ENCODE measurements at regions of chr11 and their contacts with region 1.

Region 1: DNA sequence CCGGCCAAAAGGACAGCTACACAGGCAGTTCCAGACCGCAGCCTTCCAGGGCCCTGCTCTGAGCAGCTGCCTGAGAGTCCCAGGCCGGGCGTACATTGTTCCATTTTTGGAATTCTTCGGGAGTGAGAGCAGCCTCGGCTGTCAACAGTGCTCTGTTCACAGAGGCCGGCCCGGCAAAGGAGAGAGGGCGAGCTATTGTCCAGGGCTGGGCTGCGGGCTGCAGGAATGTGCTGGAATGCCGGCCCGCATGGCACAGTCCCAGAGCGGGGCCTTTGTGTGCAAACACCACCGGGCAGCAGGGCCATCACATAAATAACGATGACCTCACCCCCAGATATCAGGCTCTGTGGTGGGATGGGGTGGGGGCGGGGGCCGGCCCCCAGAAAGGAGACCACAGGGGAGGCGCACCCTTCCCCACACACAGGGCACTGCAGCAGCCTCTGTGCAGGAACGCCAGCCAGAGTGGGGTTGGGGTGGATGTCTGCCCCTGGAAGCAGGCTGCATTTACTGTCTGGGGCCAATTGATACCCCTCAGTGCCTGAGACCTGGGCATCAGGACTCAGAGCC is 15.8 kb downstream of the LINC01488 start:
- DNase-seq: peak; percentile 95 to 97
- H3K4me3 ChIP-seq: no peak overlapping the region
- H3K4me3 Mint-ChIP-seq: peak overlapping the region; percentile 65
- H3K27ac Mint-ChIP-seq: peak overlapping the region; percentile 92
- H3K4me1 ChIP-seq: peaks cover 59% of the 10 kb centered on the region
- H3K4me1 Mint-ChIP-seq: peaks cover 65% of the 10 kb centered on the region
- H3K27me3 ChIP-seq: no peaks in the 10 kb centered on the region
- H3K27me3 Mint-ChIP-seq: no peaks in the 10 kb centered on the region
- CTCF ChIP-seq: no peak

Region 2: DNA sequence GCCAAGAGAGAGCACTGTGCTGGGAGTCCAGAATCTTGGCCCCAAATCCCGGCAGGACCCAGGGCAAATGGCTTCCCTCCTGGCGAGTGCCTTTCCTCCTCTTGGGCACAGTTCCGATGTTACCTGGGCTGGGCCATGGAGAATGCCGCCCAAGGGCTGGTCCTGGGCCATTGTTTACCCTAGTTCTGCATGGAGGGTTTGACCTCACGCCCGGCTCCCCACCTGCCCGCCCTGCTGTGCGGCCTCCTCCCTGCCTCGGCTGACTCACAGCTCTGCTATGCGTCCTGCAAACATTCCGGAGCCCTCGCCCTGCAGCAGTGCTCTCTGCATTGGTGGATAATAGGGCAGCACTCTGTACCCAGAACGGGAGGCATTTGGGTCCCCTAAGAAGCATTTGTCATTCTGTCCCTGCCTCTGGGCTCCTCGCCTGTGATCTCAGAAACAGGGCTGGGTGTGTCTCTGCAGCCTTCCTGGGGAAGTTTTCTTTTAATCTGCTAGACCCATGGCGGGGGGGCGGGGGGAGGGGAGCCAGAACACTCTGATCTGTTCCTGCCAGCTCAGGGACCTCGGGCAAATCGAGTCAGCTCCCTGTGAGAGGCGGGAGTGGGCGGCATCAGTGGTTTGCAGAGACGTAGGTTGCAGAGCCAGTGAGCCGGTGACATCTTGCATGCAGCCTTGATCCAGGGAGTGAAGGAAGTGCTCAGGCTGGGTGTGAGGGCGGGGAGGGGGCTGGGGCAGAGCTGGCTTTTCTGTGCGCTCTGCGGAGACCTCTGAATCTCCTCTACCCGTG is 374.5 kb before region 1 on chr11:
- CTCF ChIA-PET with region 1: no interaction called
- POLR2A ChIA-PET with region 1: no interaction called
- intact Hi-C with region 1: loop called (anchors 5 kb)
- DNase-seq: peak; percentile 98 to 100
- H3K4me3 ChIP-seq: peak overlapping the region; percentile 6
- H3K4me3 Mint-ChIP-seq: peak overlapping the region; percentile 76
- H3K27ac Mint-ChIP-seq: peak overlapping the region; percentile 97
- H3K4me1 ChIP-seq: peaks cover 35% of the 10 kb centered on the region
- H3K4me1 Mint-ChIP-seq: peaks cover 40% of the 10 kb centered on the region
- H3K27me3 ChIP-seq: no peaks in the 10 kb centered on the region
- H3K27me3 Mint-ChIP-seq: no peaks in the 10 kb centered on the region
- CTCF ChIP-seq: no peak

Region 3: DNA sequence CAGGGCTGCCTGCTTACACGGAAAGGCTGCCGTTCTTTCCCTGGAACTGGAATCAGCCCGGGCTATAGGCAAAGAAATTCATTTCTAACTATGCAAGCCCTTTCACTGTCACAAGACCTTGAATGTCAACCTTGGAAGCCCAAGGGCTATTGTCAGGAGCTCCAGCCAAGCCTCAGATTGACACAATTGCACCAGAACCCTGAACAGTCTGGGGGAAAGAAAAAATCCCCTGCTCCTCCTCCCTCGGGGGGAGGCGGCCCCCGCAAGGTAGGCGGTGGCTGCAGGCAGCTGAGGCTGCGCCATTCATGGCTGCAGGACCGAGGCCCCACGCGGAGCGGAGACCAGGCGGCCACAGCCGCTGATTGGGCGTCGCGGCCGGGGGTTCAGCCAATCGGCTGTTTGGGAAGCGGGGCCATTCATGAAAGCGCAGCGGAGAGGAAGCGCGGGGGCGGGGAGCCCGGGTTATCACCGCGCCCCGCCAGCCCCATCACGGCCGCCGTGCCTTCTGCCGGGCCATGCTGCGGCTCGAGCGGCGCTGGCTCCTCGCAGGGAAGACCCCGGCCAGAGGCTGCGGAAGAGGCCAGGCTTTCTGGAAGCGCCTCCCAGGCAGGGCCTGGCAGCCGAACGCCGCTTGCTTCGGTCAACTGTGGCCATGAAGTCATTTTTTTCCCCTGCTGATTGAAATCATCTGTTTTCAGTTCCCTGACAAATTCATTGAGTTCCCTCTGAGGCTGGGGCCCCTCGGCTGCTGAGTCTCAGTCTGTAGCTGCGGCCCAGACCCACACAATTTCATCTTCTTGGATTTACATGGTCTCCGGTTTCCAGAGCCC is 54.0 kb before region 1 on chr11:
- CTCF ChIA-PET with region 1: interaction called, 6 read pairs
- POLR2A ChIA-PET with region 1: interaction called, 5 read pairs
- intact Hi-C with region 1: loop called (anchors 1 kb)
- DNase-seq: peak; percentile 99
- H3K4me3 ChIP-seq: peak overlapping the region; percentile 36
- H3K4me3 Mint-ChIP-seq: peak overlapping the region; percentile 57
- H3K27ac Mint-ChIP-seq: peak overlapping the region; percentile 88
- H3K4me1 ChIP-seq: peaks cover 48% of the 10 kb centered on the region
- H3K4me1 Mint-ChIP-seq: peaks cover 51% of the 10 kb centered on the region
- H3K27me3 ChIP-seq: no peaks in the 10 kb centered on the region
- H3K27me3 Mint-ChIP-seq: no peaks in the 10 kb centered on the region
- CTCF ChIP-seq: no peak

Region 4: GRCh38 chr11:69480547-69481392 is 16.5 kb before region 1 on chr11:
- CTCF ChIA-PET with region 1: interaction called, 4 read pairs
- POLR2A ChIA-PET with region 1: interaction called, 9 read pairs
- intact Hi-C with region 1: loop called (anchors 1 kb)
- DNase-seq: no peak
- H3K4me3 ChIP-seq: no peak overlapping the region
- H3K4me3 Mint-ChIP-seq: peak overlapping the region; percentile 80
- H3K27ac Mint-ChIP-seq: peak overlapping the region; percentile 95
- H3K4me1 ChIP-seq: peaks cover 45% of the 10 kb centered on the region
- H3K4me1 Mint-ChIP-seq: peaks cover 17% of the 10 kb centered on the region
- H3K27me3 ChIP-seq: no peaks in the 10 kb centered on the region
- H3K27me3 Mint-ChIP-seq: no peaks in the 10 kb centered on the region
- CTCF ChIP-seq: no peak